K562 (cell line): ENCODE measurements at regions of chr4 and their contacts with region 1.

Region 1: GRCh38 chr4:74311696-74312313 is 3.5 kb downstream of the EPGN start:
- DNase-seq: peak in 1 of 4 experiments; percentile 67
- ATAC-seq: peak; percentile 76
- H3K4me3 ChIP-seq: no peak overlapping the region
- H3K27ac ChIP-seq: no peak overlapping the region
- H3K4me1 ChIP-seq: no peaks in the 10 kb centered on the region; a peak in 1 of 5 replicates
- H3K27me3 ChIP-seq: no peaks in the 10 kb centered on the region
- CTCF ChIP-seq: peak; percentile 50 to 81 (median 59); a peak in 5 of 6 replicates
- EP300 ChIP-seq: no peak
- POLR2A ChIP-seq: no peak
- RAD21 ChIP-seq: peak; percentile 78 to 83

Region 2: DNA sequence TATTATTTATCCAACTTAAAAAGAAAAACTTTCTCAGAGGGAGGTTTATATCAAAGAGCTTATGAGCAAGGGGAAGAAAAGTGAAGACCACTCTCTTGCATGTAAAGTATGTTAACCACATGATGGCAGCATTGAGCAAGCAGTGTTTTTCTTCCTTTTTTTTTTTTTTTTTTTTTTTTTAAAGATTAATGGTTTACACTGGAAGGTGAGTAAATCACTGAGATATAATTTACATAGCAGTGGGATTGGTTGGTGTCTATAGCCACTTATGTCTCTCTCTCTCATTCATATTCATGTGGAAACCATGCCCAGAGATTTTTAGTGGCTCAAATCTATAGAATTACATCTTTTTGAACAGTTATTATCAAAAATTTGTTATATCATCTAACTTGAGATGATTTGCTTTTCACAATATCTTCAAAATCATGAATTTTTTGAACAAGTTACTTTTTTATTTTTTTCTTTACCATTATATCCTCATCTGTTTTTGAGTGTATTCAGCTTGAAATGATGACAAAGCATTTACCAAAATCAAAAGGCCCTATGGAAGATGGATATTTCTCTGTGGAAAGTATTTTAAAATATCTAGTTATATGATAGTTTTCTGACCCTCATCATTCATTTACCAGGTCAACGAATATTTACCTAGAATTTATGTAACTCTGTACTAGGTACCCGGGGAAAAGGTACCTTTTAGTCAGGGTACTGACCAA is 122.3 kb before region 1 on chr4:
- CTCF ChIA-PET with region 1: interaction called, 57 read pairs
- POLR2A ChIA-PET with region 1: no interaction called
- in situ Hi-C with region 1: no loop called
- intact Hi-C with region 1: loop called (anchors 1 kb)
- DNase-seq: peak; percentile 33 to 70 (median 42)
- ATAC-seq: peak; percentile 67
- H3K4me3 ChIP-seq: no peak overlapping the region
- H3K27ac ChIP-seq: no peak overlapping the region
- H3K4me1 ChIP-seq: no peaks in the 10 kb centered on the region
- H3K27me3 ChIP-seq: no peaks in the 10 kb centered on the region
- CTCF ChIP-seq: peak; percentile 46 to 75 (median 55); a peak in 5 of 6 replicates
- EP300 ChIP-seq: no peak
- POLR2A ChIP-seq: no peak
- RAD21 ChIP-seq: peak; percentile 67 to 69

Region 3: DNA sequence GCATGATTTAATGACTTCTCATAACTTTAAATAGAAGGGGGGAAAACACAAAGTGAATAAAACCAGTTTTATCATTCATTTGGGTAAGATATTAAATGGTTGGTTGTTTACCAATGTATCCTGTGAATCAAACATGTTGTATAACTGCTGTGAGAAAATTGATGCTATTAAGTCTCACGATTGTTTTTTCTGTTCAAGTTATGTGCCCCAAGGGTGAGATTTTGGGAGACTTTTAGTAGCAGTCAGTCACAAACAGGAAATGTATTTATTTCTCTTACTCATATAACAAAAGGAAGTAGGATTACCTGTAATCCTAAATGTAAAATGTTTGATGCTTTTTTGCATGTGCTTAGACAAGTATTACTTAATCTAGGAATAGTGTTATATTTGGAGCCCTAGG is 114.7 kb before region 1 on chr4:
- CTCF ChIA-PET with region 1: interaction called, 3 read pairs
- POLR2A ChIA-PET with region 1: no interaction called
- in situ Hi-C with region 1: loop called (anchors 5 kb)
- intact Hi-C with region 1: no loop called
- DNase-seq: no peak
- ATAC-seq: no peak
- H3K4me3 ChIP-seq: no peak overlapping the region
- H3K27ac ChIP-seq: no peak overlapping the region
- H3K4me1 ChIP-seq: no peaks in the 10 kb centered on the region
- H3K27me3 ChIP-seq: no peaks in the 10 kb centered on the region
- CTCF ChIP-seq: no peak
- EP300 ChIP-seq: no peak
- POLR2A ChIP-seq: no peak
- RAD21 ChIP-seq: no peak